ENCODE measurements at regions of chr7 and their contacts with region 1.

Region 1: GRCh38 chr7:77247206-77247850 is 47.7 kb upstream of the FGL2 start:
- DNase-seq: peak; percentile 69 to 90 (median 80)
- H3K4me3 ChIP-seq: no peak overlapping the region
- H3K4me3 Mint-ChIP-seq: no peak overlapping the region
- H3K27ac ChIP-seq: no peak overlapping the region
- H3K27ac Mint-ChIP-seq: no peak overlapping the region
- H3K4me1 ChIP-seq: no peaks in the 10 kb centered on the region
- H3K4me1 Mint-ChIP-seq: no peaks in the 10 kb centered on the region
- H3K27me3 ChIP-seq: no peaks in the 10 kb centered on the region
- H3K27me3 Mint-ChIP-seq: no peaks in the 10 kb centered on the region

Region 2: GRCh38 chr7:77331938-77332695 is 84.8 kb after region 1 on chr7:
- CTCF ChIA-PET with region 1: interaction called, 12 read pairs
- POLR2A ChIA-PET with region 1: no interaction called
- DNase-seq: peak in 4 of 5 donors; percentile 16 to 55 (median 34)
- H3K4me3 ChIP-seq: no peak overlapping the region
- H3K4me3 Mint-ChIP-seq: no peak overlapping the region
- H3K27ac ChIP-seq: no peak overlapping the region
- H3K27ac Mint-ChIP-seq: peak overlapping the region in 2 of 8 donors; percentile 27 to 59
- H3K4me1 ChIP-seq: peaks cover 34% of the 10 kb centered on the region
- H3K4me1 Mint-ChIP-seq: peaks cover 41 to 55% (median 48%) of the 10 kb centered on the region in 3 donors
- H3K27me3 ChIP-seq: no peaks in the 10 kb centered on the region
- H3K27me3 Mint-ChIP-seq: peaks cover 0 to 4% of the 10 kb centered on the region in 2 donors

Measured in CD8-positive, alpha-beta memory T cell (primary cell).